ENCODE measurements at regions of chr5 and their contacts with region 1.

Region 1: GRCh38 chr5:142874537-142874936 is 104.4 kb downstream of the ARHGAP26 start:
- DNase-seq: no peak
- CTCF ChIP-seq: no peak

Region 2: GRCh38 chr5:142726188-142726731 is 148.3 kb before region 1 on chr5:
- in situ Hi-C with region 1: loop called (anchors 10 kb)
- DNase-seq: no peak
- CTCF ChIP-seq: no peak